Activated CD8-positive, alpha-beta T cell treated with anti-CD3 and anti-CD28 coated beads, Interleukin-2, amount 10 ng/mL, durations not matched to agents 7 days and 5 days (primary cell): ENCODE measurements at regions of chr14 and their contacts with region 1.

Region 1: DNA sequence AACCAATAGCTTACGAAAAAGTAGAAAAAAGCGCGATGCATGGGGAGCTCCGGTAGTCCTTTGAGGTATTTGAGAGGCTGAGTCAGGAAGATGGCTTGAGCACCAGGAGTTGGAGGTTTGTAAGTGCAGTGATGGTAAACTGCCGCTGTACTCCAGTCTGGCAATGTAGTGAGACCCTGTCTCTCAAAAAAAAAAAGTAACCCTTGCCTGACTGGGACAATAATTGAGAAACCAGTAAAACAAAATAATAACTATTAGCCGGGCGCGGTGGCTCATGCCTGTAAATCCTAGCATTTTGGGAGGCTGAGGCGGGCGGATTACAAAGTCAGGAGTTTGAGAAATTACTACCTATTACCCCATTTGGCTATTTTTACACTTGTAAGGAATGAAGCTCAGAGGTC is 632 bp upstream of the ACOT2 start:
- DNase-seq: peak; percentile 34
- ATAC-seq: no peak
- H3K4me3 Mint-ChIP-seq: peak overlapping the region; percentile 92
- H3K27ac Mint-ChIP-seq: peak overlapping the region; percentile 98
- H3K4me1 Mint-ChIP-seq: peaks cover 36% of the 10 kb centered on the region
- H3K27me3 Mint-ChIP-seq: no peaks in the 10 kb centered on the region

Region 2: DNA sequence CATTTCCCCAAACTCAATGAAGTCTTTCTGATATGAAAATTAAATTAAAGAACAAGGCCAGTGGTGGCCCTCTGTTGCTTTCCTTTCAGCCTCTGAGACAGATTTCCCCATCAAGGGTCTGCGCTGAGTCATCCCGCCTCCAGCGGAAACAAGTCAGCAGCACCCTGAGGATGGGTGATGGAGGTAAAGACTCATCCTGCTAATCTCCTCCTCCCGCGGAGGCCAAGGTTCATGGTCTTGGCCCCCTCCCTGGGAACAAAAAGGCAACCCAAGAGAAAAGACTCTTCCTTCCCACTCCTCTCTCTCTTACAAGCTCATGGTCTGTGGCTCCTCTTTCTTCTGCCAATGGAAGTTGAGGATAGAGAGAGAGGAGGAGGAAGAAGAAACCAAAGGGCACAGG is 101.0 kb before region 1 on chr14:
- CTCF ChIA-PET with region 1: no interaction called
- POLR2A ChIA-PET with region 1: no interaction called
- DNase-seq: no peak
- ATAC-seq: no peak
- H3K4me3 Mint-ChIP-seq: no peak overlapping the region
- H3K27ac Mint-ChIP-seq: no peak overlapping the region
- H3K4me1 Mint-ChIP-seq: peaks cover 41% of the 10 kb centered on the region
- H3K27me3 Mint-ChIP-seq: no peaks in the 10 kb centered on the region

Region 3: DNA sequence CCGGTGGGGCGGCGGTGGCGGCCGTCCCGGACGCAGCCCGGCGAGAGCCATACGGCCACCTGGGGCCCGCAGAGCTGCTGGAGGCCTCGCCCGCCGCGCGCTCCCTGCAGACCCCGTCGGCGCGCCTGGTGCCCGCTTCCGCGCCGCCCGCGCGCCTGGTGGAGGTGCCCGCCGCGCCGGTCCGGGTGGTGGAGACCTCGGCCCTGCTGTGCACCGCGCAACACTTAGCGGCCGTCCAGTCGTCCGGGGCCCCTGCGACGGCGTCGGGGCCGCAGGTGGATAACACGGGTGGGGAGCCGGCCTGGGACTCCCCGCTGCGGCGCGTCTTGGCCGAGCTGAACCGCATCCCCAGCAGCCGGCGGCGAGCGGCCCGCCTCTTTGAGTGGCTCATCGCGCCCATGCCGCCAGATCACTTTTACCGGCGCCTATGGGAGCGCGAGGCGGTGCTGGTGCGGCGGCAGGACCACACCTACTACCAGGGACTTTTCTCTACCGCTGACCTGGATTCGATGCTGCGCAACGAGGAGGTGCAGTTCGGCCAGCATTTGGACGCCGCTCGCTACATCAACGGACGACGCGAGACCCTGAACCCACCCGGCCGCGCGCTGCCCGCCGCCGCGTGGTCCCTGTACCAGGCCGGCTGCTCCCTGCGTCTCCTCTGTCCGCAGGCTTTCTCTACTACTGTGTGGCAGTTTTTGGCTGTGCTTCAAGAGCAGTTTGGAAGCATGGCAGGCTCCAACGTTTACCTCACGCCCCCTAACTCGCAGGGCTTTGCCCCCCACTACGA is 76.9 kb before region 1 on chr14:
- CTCF ChIA-PET with region 1: interaction called, 3 read pairs
- POLR2A ChIA-PET with region 1: interaction called, 22 read pairs
- DNase-seq: peak; percentile 76
- ATAC-seq: peak; percentile 76
- H3K4me3 Mint-ChIP-seq: peak overlapping the region; percentile 81
- H3K27ac Mint-ChIP-seq: peak overlapping the region; percentile 85
- H3K4me1 Mint-ChIP-seq: peaks cover 43% of the 10 kb centered on the region
- H3K27me3 Mint-ChIP-seq: peaks cover 8% of the 10 kb centered on the region

Region 4: GRCh38 chr14:73503648-73504047 is 64.7 kb before region 1 on chr14:
- CTCF ChIA-PET with region 1: interaction called, 73 read pairs
- POLR2A ChIA-PET with region 1: no interaction called
- DNase-seq: no peak
- ATAC-seq: no peak
- H3K4me3 Mint-ChIP-seq: no peak overlapping the region
- H3K27ac Mint-ChIP-seq: no peak overlapping the region
- H3K4me1 Mint-ChIP-seq: no peaks in the 10 kb centered on the region
- H3K27me3 Mint-ChIP-seq: no peaks in the 10 kb centered on the region

Region 5: DNA sequence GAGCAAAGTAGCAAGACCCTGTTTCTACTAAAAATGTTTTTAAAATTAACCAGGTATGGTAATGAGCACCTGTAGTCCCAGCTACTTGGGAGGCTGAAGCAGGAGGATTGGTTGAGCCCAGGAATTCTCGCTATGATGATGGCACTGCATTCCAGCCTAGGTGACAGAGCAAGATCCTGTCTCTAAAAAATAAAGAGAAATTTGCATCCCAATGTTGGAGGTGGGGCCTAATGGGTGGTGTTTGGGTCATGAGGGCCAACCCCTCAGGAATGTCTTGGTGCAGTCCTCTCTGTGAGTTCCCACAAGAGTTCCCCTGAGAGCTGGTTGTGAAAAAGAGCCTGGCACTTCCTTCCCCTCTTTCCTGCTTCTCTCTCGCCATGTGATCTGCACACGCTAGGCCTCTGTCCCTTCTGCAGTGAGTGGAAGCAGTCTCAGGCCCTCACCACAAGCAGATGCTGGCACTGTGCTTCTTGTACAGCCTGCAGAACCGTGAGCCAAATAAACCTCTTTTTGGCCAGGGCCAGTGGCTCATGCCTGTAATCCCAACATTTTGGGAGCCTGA is 55.2 kb after region 1 on chr14:
- CTCF ChIA-PET with region 1: no interaction called
- POLR2A ChIA-PET with region 1: no interaction called
- DNase-seq: no peak
- ATAC-seq: no peak
- H3K4me3 Mint-ChIP-seq: no peak overlapping the region
- H3K27ac Mint-ChIP-seq: no peak overlapping the region
- H3K4me1 Mint-ChIP-seq: no peaks in the 10 kb centered on the region
- H3K27me3 Mint-ChIP-seq: peaks cover 3% of the 10 kb centered on the region